ENCODE measurements at regions of chr2 and their contacts with region 1.

Region 1: GRCh38 chr2:169815849-169816248 is 8.9 kb downstream of the METTL5 start:
- DNase-seq: no peak
- H3K4me3 ChIP-seq: no peak overlapping the region
- CTCF ChIP-seq: no peak
- POLR2A ChIP-seq: no peak

Region 2: GRCh38 chr2:169479257-169480078 is 336.4 kb before region 1 on chr2 and contains the start of gene BBS5:
- intact Hi-C with region 1: loop called (anchors 5 kb)
- DNase-seq: peak; percentile 64 to 93
- H3K4me3 ChIP-seq: peak within 1 kb of the TSS; percentile 64
- CTCF ChIP-seq: no peak
- POLR2A ChIP-seq: no peak
- total RNA-seq, gene BBS5: 4.7 to 7.9 (median 5.3) TPM

Region 3: DNA sequence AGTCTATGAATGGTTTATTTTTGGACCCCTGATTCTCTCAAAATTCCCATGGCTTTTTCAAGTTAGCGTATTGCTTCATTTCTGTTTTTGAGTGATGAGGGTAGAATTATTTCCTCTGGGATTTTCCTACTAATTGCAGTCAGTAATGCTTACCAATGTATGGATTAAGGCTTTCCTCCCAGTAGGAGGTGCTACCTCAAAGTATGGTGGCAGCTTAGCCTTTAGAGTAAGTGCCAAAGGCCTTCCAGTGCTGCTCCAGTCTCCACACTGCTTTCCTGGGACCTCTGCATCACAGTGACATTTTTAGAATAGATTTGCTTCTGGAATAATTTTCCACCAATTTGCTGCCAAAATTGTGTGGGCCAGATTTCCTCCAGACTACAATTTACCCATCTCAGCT is 33.3 kb before region 1 on chr2:
- intact Hi-C with region 1: no loop called
- DNase-seq: no peak
- H3K4me3 ChIP-seq: no peak overlapping the region
- CTCF ChIP-seq: no peak
- POLR2A ChIP-seq: no peak

Region 4: GRCh38 chr2:169839954-169840746 is 24.3 kb after region 1 on chr2:
- intact Hi-C with region 1: no loop called
- DNase-seq: no peak
- H3K4me3 ChIP-seq: no peak overlapping the region
- CTCF ChIP-seq: no peak
- POLR2A ChIP-seq: no peak

Measured in lower leg skin (tissue), 4 donors.